ENCODE measurements at regions of chr5 and their contacts with region 1.

Region 1: GRCh38 chr5:142611154-142611553 is 74.7 kb downstream of the FGF1 start:
- DNase-seq: peak; percentile 78
- ATAC-seq: peak; percentile 92
- H3K4me3 Mint-ChIP-seq: no peak overlapping the region
- H3K27ac Mint-ChIP-seq: no peak overlapping the region
- H3K4me1 Mint-ChIP-seq: no peaks in the 10 kb centered on the region
- H3K27me3 Mint-ChIP-seq: peaks cover 9% of the 10 kb centered on the region

Region 2: DNA sequence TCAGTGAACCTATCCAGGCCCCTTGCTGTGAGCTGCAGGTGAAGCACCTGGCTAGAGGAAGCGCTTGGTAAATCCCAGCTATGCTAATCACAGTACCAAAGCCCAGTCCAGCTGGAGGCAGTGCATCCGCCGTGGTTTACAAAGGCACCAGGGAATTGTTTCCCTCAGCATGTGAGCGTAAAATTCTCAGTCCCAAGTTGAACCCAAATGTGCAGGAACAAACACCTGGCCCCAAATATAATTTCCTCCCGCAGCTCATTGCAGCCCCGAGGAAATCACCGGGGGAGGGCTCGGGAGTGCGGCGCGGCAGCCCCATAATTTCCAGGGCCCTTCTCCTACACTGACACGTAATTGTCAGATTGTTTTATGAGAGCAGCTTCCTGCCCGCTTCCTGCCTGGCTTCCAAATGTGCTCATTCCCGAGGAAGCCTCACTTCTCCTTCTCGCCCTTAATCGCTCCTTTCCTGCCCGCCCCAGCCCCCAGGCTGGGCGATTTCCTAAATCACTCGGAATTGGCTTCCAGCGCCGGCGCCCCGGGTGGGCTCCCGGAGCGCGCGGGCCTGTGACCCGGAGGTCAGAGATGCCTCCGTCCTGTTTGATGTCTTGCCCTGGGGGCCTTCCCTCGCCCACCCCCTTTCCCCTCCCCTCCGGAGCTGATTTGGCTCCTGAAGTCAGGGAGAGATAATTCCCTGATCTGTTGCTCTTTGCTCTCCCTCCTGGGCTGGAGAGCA is 59.7 kb before region 1 on chr5:
- CTCF ChIA-PET with region 1: no interaction called
- POLR2A ChIA-PET with region 1: no interaction called
- DNase-seq: no peak
- ATAC-seq: no peak
- H3K4me3 Mint-ChIP-seq: no peak overlapping the region
- H3K27ac Mint-ChIP-seq: no peak overlapping the region
- H3K4me1 Mint-ChIP-seq: peaks cover 1% of the 10 kb centered on the region
- H3K27me3 Mint-ChIP-seq: peaks cover 37% of the 10 kb centered on the region

Region 3: GRCh38 chr5:142621227-142621626 is 10.1 kb after region 1 on chr5:
- CTCF ChIA-PET with region 1: interaction called, 10 read pairs
- POLR2A ChIA-PET with region 1: no interaction called
- DNase-seq: no peak
- ATAC-seq: no peak
- H3K4me3 Mint-ChIP-seq: no peak overlapping the region
- H3K27ac Mint-ChIP-seq: no peak overlapping the region
- H3K4me1 Mint-ChIP-seq: peaks cover 11% of the 10 kb centered on the region
- H3K27me3 Mint-ChIP-seq: peaks cover 18% of the 10 kb centered on the region

Region 4: DNA sequence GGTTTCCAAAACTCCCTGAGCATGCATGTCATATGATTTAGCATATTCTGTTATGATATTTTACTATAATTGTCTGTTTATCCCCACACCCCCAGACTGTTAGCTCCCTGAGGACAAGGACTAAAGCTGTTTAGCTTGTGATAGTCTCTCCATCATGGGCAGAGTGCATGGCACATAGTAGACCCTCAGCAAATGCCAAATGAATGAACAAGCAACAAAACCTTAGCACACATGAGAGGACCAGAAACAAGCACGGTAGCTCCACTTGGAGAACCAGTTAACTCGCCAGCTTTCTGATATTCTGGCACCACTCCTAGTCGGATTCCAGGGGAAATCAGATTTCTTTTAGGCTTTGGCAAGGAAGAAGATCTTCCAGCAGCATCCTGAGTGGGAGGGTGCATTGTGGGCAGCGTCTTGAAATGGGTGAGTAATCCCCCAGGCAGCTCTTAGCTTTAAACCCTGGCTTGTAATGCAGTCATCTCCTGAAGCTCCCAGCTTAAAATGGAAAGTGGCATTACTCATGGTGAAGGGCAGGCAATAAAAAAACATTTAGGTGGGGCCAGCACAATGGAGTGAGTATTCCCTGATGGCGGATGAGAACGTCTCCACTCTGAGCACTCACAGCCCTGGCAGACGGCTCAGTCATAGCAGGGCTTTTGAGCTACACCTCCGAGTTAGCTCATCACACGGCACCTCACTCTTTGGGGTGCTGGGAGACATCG is 33.6 kb after region 1 on chr5:
- CTCF ChIA-PET with region 1: no interaction called
- POLR2A ChIA-PET with region 1: no interaction called
- DNase-seq: no peak
- ATAC-seq: no peak
- H3K4me3 Mint-ChIP-seq: no peak overlapping the region
- H3K27ac Mint-ChIP-seq: no peak overlapping the region
- H3K4me1 Mint-ChIP-seq: peaks cover 6% of the 10 kb centered on the region
- H3K27me3 Mint-ChIP-seq: peaks cover 23% of the 10 kb centered on the region

Region 5: GRCh38 chr5:142671801-142672200 is 60.6 kb after region 1 on chr5:
- CTCF ChIA-PET with region 1: no interaction called
- POLR2A ChIA-PET with region 1: no interaction called
- DNase-seq: no peak
- ATAC-seq: no peak
- H3K4me3 Mint-ChIP-seq: no peak overlapping the region
- H3K27ac Mint-ChIP-seq: no peak overlapping the region
- H3K4me1 Mint-ChIP-seq: no peaks in the 10 kb centered on the region
- H3K27me3 Mint-ChIP-seq: peaks cover 3% of the 10 kb centered on the region

Region 6: GRCh38 chr5:142699184-142699720 is 88.1 kb after region 1 on chr5:
- CTCF ChIA-PET with region 1: interaction called, 22 read pairs
- POLR2A ChIA-PET with region 1: no interaction called
- DNase-seq: peak; percentile 84
- ATAC-seq: peak; percentile 88
- H3K4me3 Mint-ChIP-seq: no peak overlapping the region
- H3K27ac Mint-ChIP-seq: no peak overlapping the region
- H3K4me1 Mint-ChIP-seq: no peaks in the 10 kb centered on the region
- H3K27me3 Mint-ChIP-seq: peaks cover 21% of the 10 kb centered on the region